ENCODE measurements at regions of chr3 and their contacts with region 1.

Region 1: GRCh38 chr3:71859123-71859519 is 74.2 kb upstream of the PROK2 start:
- DNase-seq: no peak
- ATAC-seq: peak in 4 of 8 donors; percentile 61 to 71 (median 62)
- H3K4me3 ChIP-seq: no peak overlapping the region
- H3K27ac ChIP-seq: peak overlapping the region in 1 of 10 donors; percentile 75
- H3K4me1 ChIP-seq: peaks cover 0 to 9% (median 0%) of the 10 kb centered on the region in 9 donors
- H3K27me3 ChIP-seq: peaks cover 0 to 22% (median 8%) of the 10 kb centered on the region in 7 donors
- CTCF ChIP-seq: peak in 6 of 9 donors; percentile 18 to 58 (median 42)

Region 2: GRCh38 chr3:71725279-71725991 is 133.7 kb before region 1 on chr3 and contains the start of gene EIF4E3:
- intact Hi-C with region 1: loop called in 4 of 10 experiments (anchors 5 to 10 kb)
- DNase-seq: peak in 1 of 2 donors; percentile 46
- ATAC-seq: peak; percentile 40 to 78 (median 64)
- H3K4me3 ChIP-seq: peak within 1 kb of the TSS; percentile 54 to 97 (median 80)
- H3K27ac ChIP-seq: peak within 1 kb of the TSS in 9 of 10 donors; percentile 70 to 92 (median 76)
- H3K4me1 ChIP-seq: peaks cover 3 to 66% (median 19%) of the 10 kb centered on the region in 9 donors
- H3K27me3 ChIP-seq: no peaks in the 10 kb centered on the region
- CTCF ChIP-seq: no peak
- total RNA-seq, gene EIF4E3: 44.8 to 58.1 (median 53.0) TPM

Region 3: DNA sequence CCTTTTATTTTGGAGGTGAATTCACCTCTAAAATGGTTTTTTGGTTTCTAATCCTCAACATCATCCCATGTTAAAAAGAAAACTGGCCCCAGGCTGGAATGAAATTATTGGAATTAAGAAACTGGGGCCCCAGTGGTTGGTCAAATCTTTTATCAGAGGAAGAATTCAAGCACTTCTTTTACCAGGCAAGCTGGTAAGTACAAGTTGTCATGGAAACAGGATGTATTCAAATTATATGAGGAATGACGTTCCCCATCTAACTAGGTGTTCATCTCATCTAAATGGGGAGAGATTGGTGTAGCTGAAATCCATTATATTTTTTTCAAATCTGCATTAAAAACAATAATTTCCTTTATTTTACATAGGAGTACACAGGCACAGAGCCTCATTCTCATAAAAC is 124.2 kb before region 1 on chr3:
- intact Hi-C with region 1: loop called in 3 of 10 experiments (anchors 5 to 10 kb)
- DNase-seq: no peak
- ATAC-seq: no peak
- H3K4me3 ChIP-seq: no peak overlapping the region
- H3K27ac ChIP-seq: no peak overlapping the region
- H3K4me1 ChIP-seq: peaks cover 0 to 7% (median 0%) of the 10 kb centered on the region in 9 donors
- H3K27me3 ChIP-seq: peaks cover 0 to 4% (median 0%) of the 10 kb centered on the region in 7 donors
- CTCF ChIP-seq: no peak